ENCODE measurements at regions of chr6 and their contacts with region 1.

Region 1: DNA sequence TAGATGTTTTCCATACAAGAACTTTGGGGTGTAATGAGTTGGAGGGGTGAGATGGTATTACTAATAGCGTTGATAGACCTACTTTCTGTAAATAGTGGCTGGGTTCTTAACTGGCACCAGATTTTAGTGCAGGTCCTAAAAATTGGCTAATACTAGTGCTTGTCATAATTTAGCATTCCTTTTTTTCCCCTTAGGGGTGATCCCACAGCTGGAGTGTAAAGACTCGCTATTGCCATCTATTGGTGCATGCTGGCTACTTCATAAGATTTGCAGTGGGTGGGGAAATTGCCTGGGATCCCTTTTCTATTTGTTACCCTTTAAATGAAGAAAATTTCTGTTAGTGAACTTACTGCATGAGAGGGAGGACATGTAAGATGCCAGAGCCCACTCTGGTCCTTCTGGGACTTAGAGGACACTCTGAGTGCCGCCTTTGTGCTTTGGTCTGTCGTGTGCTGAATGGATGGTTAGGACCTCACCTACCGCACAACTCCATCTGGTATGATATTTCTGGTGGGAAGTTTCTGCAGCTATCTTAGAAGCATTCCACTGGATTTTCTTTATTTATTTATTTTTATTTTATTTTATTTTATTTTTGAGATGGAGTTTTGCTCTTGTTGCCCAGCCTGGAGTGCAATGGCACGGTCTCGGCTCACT is 195.5 kb downstream of the JARID2 start:
- DNase-seq: peak in 3 of 5 donors; percentile 26 to 59 (median 32)
- H3K4me3 ChIP-seq: no peak overlapping the region
- H3K27ac ChIP-seq: no peak overlapping the region
- H3K4me1 ChIP-seq: peaks cover 13% of the 10 kb centered on the region
- H3K27me3 ChIP-seq: no peaks in the 10 kb centered on the region
- CTCF ChIP-seq: peak; percentile 49 to 60 (median 55)
- EP300 ChIP-seq: no peak
- POLR2A ChIP-seq: no peak

Region 2: DNA sequence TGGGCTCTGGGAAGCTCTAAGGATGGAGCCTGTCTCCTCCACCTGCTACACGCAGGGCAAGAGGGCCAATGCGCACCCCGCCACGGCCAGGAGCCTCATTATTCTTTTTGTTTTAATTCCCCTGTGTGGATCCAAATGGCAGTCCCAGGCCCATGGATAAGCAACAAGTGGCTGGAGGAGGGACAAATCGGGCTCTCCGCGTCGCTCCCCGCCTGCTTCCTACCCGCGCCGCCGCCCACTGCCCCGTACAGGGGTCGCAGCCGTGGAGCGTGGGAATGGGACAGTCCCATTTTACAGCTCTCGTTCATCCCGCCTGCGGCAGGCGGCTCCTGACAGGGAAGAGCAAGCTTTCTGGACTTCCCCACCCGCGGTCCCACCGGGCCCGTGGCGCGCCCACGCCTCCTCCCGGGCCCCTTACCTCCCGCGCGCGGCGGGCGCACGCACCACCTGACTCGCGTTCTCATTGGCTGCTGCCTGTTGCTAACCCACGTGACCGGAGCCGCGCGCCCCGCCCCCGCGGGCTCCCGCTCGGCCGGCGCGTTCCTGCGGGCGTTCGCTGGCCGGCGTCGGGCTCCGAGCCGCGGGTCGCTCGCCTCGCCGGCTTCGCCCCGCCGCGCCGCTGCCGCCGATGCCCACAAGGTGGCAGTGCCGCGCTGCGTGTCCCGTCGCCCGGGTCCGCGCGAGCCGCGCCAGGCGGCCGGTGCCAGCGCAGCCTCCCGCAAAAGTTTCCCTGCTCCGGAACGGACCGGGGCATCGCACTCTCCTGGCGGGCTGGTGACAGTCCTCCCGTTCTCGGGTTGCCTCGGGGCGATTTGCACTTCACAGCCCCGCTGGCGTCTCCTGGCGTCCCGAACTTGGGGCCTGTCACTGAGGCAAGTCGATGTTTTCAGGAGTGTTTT is 1230.4 kb before region 1 on chr6:
- intact Hi-C with region 1: loop called in 1 of 4 experiments (anchors 10 kb)
- DNase-seq: peak; percentile 90 to 96 (median 94)
- H3K4me3 ChIP-seq: peak overlapping the region; percentile 52
- H3K27ac ChIP-seq: peak overlapping the region; percentile 74 to 78
- H3K4me1 ChIP-seq: peaks cover 2% of the 10 kb centered on the region
- H3K27me3 ChIP-seq: no peaks in the 10 kb centered on the region
- CTCF ChIP-seq: peak; percentile 28 to 95 (median 94)
- EP300 ChIP-seq: no peak
- POLR2A ChIP-seq: no peak

Region 3: GRCh38 chr6:15485936-15486335 is 44.6 kb after region 1 on chr6:
- intact Hi-C with region 1: loop called in 1 of 4 experiments (anchors 5 kb)
- DNase-seq: no peak
- H3K4me3 ChIP-seq: no peak overlapping the region
- H3K27ac ChIP-seq: no peak overlapping the region
- H3K4me1 ChIP-seq: no peaks in the 10 kb centered on the region
- H3K27me3 ChIP-seq: no peaks in the 10 kb centered on the region
- CTCF ChIP-seq: no peak
- EP300 ChIP-seq: no peak
- POLR2A ChIP-seq: no peak

Measured in ovary (tissue), 10 donors.